ENCODE measurements at regions of chr2 and their contacts with region 1.

Region 1: GRCh38 chr2:36433311-36434217 is 78.0 kb downstream of the CRIM1 start:
- DNase-seq: peak; percentile 92
- H3K4me3 Mint-ChIP-seq: peak overlapping the region; percentile 10
- H3K27ac Mint-ChIP-seq: peak overlapping the region; percentile 54
- H3K4me1 Mint-ChIP-seq: peaks cover 46% of the 10 kb centered on the region
- H3K27me3 Mint-ChIP-seq: no peaks in the 10 kb centered on the region
- CTCF ChIP-seq: no peak

Region 2: GRCh38 chr2:35871672-35872071 is 561.9 kb before region 1 on chr2:
- CTCF ChIA-PET with region 1: no interaction called
- POLR2A ChIA-PET with region 1: no interaction called
- intact Hi-C with region 1: no loop called
- DNase-seq: no peak
- H3K4me3 Mint-ChIP-seq: no peak overlapping the region
- H3K27ac Mint-ChIP-seq: no peak overlapping the region
- H3K4me1 Mint-ChIP-seq: no peaks in the 10 kb centered on the region
- H3K27me3 Mint-ChIP-seq: peaks cover 24% of the 10 kb centered on the region
- CTCF ChIP-seq: no peak

Region 3: GRCh38 chr2:36367895-36368353 is 65.6 kb before region 1 on chr2:
- CTCF ChIA-PET with region 1: interaction called, 12 read pairs
- POLR2A ChIA-PET with region 1: interaction called, 183 read pairs
- intact Hi-C with region 1: loop called (anchors 1 kb)
- DNase-seq: peak; percentile 79
- H3K4me3 Mint-ChIP-seq: peak overlapping the region; percentile 50
- H3K27ac Mint-ChIP-seq: peak overlapping the region; percentile 87
- H3K4me1 Mint-ChIP-seq: peaks cover 82% of the 10 kb centered on the region
- H3K27me3 Mint-ChIP-seq: no peaks in the 10 kb centered on the region
- CTCF ChIP-seq: no peak

Region 4: DNA sequence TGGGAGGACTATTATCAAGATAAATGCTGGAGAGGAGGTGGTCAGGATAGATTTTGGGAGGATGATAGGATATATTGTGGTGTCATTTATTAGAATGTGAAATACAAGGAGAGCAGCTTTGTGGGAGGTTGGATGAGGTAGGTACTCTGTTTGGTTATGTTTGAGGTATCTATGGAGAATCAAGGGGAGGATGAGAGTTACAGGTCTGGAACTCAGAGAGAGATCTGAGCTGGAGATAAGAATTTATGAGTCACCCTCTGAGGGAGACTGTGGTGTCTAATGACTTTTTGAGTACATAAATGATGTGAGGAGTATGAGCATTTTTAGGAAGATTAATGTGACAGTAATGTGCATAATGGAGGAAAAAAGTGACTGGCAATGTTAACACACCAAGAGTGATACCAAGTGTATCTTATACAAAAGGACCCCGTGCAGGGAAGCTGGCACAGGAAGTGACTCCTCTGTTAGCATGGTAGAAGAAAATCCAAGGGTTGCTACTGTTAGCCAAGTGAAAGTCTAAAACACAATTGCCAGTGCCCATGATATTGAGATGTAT is 29.8 kb before region 1 on chr2:
- CTCF ChIA-PET with region 1: interaction called, 7 read pairs
- POLR2A ChIA-PET with region 1: interaction called, 19 read pairs
- intact Hi-C with region 1: loop called (anchors 1 kb)
- DNase-seq: peak; percentile 75
- H3K4me3 Mint-ChIP-seq: no peak overlapping the region
- H3K27ac Mint-ChIP-seq: no peak overlapping the region
- H3K4me1 Mint-ChIP-seq: peaks cover 12% of the 10 kb centered on the region
- H3K27me3 Mint-ChIP-seq: no peaks in the 10 kb centered on the region
- CTCF ChIP-seq: no peak

Region 5: GRCh38 chr2:36423172-36423571 is 10.4 kb before region 1 on chr2:
- CTCF ChIA-PET with region 1: interaction called, 4 read pairs
- POLR2A ChIA-PET with region 1: interaction called, 28 read pairs
- intact Hi-C with region 1: no loop called
- DNase-seq: no peak
- H3K4me3 Mint-ChIP-seq: no peak overlapping the region
- H3K27ac Mint-ChIP-seq: no peak overlapping the region
- H3K4me1 Mint-ChIP-seq: peaks cover 10% of the 10 kb centered on the region
- H3K27me3 Mint-ChIP-seq: no peaks in the 10 kb centered on the region
- CTCF ChIP-seq: no peak

Region 6: GRCh38 chr2:36461039-36461681 is 27.6 kb after region 1 on chr2:
- CTCF ChIA-PET with region 1: interaction called, 5 read pairs
- POLR2A ChIA-PET with region 1: interaction called, 14 read pairs
- intact Hi-C with region 1: no loop called
- DNase-seq: peak; percentile 77
- H3K4me3 Mint-ChIP-seq: no peak overlapping the region
- H3K27ac Mint-ChIP-seq: no peak overlapping the region
- H3K4me1 Mint-ChIP-seq: peaks cover 7% of the 10 kb centered on the region
- H3K27me3 Mint-ChIP-seq: no peaks in the 10 kb centered on the region
- CTCF ChIP-seq: no peak